ENCODE measurements at regions of chr15 and their contacts with region 1.

Region 1: DNA sequence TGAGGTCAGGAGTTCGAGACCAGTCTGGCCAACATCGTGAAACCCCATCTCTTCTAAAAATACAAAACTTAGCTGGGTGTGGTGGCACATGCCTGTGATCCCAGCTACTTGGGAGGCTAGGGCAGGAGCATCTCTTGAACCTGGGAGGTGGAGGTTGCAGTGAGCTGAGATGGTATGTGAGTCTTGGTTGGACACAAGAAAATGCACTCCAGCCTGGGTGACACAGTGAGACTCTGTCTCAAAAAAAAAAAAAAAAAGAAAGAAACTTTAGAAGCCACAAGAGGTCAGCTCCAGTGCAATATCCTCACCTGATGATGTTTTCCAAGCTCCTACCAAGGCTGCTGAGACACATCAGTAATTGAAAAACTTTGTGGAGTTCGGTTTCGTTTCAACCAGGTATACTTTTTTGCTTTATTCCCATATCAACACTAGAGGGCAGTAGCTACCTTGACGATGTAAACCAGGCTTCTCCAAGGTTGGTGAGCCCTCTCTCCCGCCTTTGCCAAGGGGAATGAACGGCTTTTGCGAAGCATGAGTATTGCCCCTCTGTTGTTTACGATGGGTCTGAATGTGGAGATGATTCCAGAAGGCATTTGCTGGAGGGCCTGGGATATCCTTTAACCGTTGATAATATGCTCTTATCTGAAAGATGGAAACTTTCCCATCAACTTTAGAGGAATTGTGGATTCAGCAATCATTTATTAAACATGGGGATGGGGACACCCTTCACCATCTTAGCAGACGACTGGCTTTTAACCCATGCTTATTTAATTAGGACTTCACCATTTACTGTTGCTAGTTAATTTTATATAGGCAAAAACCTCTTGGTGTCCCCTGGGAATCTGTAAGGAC is 202.8 kb downstream of the SV2B start:
- DNase-seq: peak in 6 of 7 donors; percentile 34 to 58 (median 45)
- H3K4me3 ChIP-seq: no peak overlapping the region
- H3K27ac ChIP-seq: no peak overlapping the region
- H3K4me1 ChIP-seq: no peaks in the 10 kb centered on the region
- H3K27me3 ChIP-seq: peaks cover 7% of the 10 kb centered on the region
- CTCF ChIP-seq: peak; percentile 48 to 84 (median 77)
- POLR2A ChIP-seq: no peak

Region 2: DNA sequence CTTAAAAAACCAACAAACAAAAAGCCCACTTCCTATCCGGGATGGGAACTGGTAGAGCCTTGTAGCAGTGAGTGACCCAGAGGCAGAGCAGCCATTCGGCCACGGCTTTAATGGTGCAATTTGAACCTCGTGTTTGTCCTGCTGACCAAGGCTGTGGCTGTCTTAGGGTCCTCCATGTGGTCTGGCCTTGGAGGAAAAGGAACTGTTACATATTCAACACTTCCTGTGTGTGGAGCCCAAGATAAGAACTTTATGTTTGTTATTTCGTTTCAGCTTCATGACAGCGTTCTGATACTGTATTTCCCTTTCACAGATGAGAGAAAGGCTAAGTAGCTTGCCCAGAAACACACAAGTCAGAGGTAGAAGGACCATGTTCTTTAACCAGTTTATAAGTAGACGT is 67.0 kb after region 1 on chr15:
- intact Hi-C with region 1: no loop called
- DNase-seq: no peak
- H3K4me3 ChIP-seq: no peak overlapping the region
- H3K27ac ChIP-seq: no peak overlapping the region
- H3K4me1 ChIP-seq: no peaks in the 10 kb centered on the region
- H3K27me3 ChIP-seq: no peaks in the 10 kb centered on the region
- CTCF ChIP-seq: no peak
- POLR2A ChIP-seq: no peak

Region 3: DNA sequence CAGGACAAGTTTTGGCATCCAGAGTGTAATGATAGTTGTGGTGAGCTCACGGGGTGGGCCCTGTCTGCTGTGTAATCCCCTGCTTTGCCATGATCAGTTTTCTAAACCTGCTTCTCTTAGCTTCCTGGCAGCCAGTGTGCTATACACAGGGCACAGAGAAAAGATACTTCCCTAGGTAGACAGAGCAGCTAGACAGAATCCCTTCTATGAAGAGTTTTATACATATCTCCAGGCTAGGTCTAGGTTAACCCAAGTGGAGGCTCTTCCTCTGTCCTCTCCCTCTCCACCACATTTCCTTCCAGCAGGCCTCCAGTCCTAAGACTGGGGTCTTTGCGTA is 194.5 kb after region 1 on chr15:
- intact Hi-C with region 1: no loop called
- DNase-seq: no peak
- H3K4me3 ChIP-seq: no peak overlapping the region
- H3K27ac ChIP-seq: no peak overlapping the region
- H3K4me1 ChIP-seq: no peaks in the 10 kb centered on the region
- H3K27me3 ChIP-seq: no peaks in the 10 kb centered on the region
- CTCF ChIP-seq: no peak
- POLR2A ChIP-seq: no peak

Region 4: GRCh38 chr15:91522663-91523332 is 220.0 kb after region 1 on chr15:
- intact Hi-C with region 1: loop called (anchors 5 kb)
- DNase-seq: no peak
- H3K4me3 ChIP-seq: no peak overlapping the region
- H3K27ac ChIP-seq: no peak overlapping the region
- H3K4me1 ChIP-seq: no peaks in the 10 kb centered on the region
- H3K27me3 ChIP-seq: no peaks in the 10 kb centered on the region
- CTCF ChIP-seq: peak in 5 of 6 experiments; percentile 28 to 65 (median 40)
- POLR2A ChIP-seq: no peak

Region 5: DNA sequence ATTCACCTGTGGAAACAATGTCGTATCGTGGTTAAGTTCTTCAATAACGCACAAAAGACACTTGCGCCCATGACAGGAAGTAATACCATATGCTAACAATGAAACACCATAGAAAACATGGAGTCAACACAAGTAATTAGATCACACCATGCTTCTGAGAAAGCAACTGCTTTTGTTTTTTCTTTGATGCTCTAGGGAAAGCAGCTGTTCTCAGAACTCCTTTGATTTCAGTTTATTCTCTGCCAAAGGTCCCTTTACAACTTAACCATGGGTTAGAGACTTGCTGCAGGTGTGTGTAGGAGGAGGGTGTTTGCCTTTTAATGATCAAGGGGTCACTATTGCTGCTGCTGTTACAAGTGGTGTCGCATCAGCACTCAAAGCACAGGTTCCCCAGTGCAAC is 226.7 kb after region 1 on chr15:
- intact Hi-C with region 1: loop called (anchors 5 kb)
- DNase-seq: no peak
- H3K4me3 ChIP-seq: no peak overlapping the region
- H3K27ac ChIP-seq: no peak overlapping the region
- H3K4me1 ChIP-seq: no peaks in the 10 kb centered on the region
- H3K27me3 ChIP-seq: no peaks in the 10 kb centered on the region
- CTCF ChIP-seq: no peak
- POLR2A ChIP-seq: no peak

Region 6: GRCh38 chr15:91852741-91853510 is 550.1 kb after region 1 on chr15:
- intact Hi-C with region 1: loop called in 1 of 2 experiments (anchors 5 kb)
- DNase-seq: peak; percentile 77 to 88 (median 82)
- H3K4me3 ChIP-seq: peak overlapping the region in 3 of 4 donors; percentile 36 to 95 (median 49)
- H3K27ac ChIP-seq: peak overlapping the region; percentile 56 to 95 (median 84)
- H3K4me1 ChIP-seq: peaks cover 10 to 26% of the 10 kb centered on the region in 2 donors
- H3K27me3 ChIP-seq: no peaks in the 10 kb centered on the region
- CTCF ChIP-seq: peak; percentile 39 to 87 (median 78)
- POLR2A ChIP-seq: peak in 1 of 2 donors; percentile 41